Activated CD4-positive, alpha-beta T cell treated with anti-CD3 and anti-CD28 coated beads for 36 hours (primary cell): ENCODE measurements at regions of chr3 and their contacts with region 1.

Region 1: GRCh38 chr3:67654099-67654843 is at the start of gene SUCLG2:
- DNase-seq: peak; percentile 91
- ATAC-seq: peak; percentile 77
- H3K4me3 Mint-ChIP-seq: peak within 1 kb of the TSS; percentile 74
- H3K27ac Mint-ChIP-seq: peak within 1 kb of the TSS; percentile 91
- H3K4me1 Mint-ChIP-seq: peaks cover 59% of the 10 kb centered on the region
- H3K27me3 Mint-ChIP-seq: no peaks in the 10 kb centered on the region
- total RNA-seq, gene SUCLG2: 58.2 to 61.1 TPM

Region 2: GRCh38 chr3:66220602-66221377 is 1433.5 kb before region 1 on chr3 and contains the start of gene SLC25A26:
- CTCF ChIA-PET with region 1: no interaction called
- POLR2A ChIA-PET with region 1: no interaction called
- intact Hi-C with region 1: loop called in 1 of 2 experiments (anchors 5 kb)
- DNase-seq: peak; percentile 99
- ATAC-seq: peak; percentile 96
- H3K4me3 Mint-ChIP-seq: peak within 1 kb of the TSS; percentile 86
- H3K27ac Mint-ChIP-seq: peak within 1 kb of the TSS; percentile 92
- H3K4me1 Mint-ChIP-seq: peaks cover 48% of the 10 kb centered on the region
- H3K27me3 Mint-ChIP-seq: no peaks in the 10 kb centered on the region
- total RNA-seq, gene SLC25A26: 14.2 to 22.7 TPM

Region 3: GRCh38 chr3:66998113-66998903 is 656.0 kb before region 1 on chr3 and contains the start of gene KBTBD8:
- CTCF ChIA-PET with region 1: no interaction called
- POLR2A ChIA-PET with region 1: interaction called, 5 read pairs
- intact Hi-C with region 1: loop called (anchors 1 to 2 kb)
- DNase-seq: peak; percentile 98
- ATAC-seq: peak; percentile 95
- H3K4me3 Mint-ChIP-seq: peak within 1 kb of the TSS; percentile 88
- H3K27ac Mint-ChIP-seq: peak within 1 kb of the TSS; percentile 92
- H3K4me1 Mint-ChIP-seq: peaks cover 30% of the 10 kb centered on the region
- H3K27me3 Mint-ChIP-seq: peaks cover 7% of the 10 kb centered on the region
- total RNA-seq, gene KBTBD8: 8.3 to 9.2 TPM

Region 4: GRCh38 chr3:67384760-67385397 is 269.4 kb before region 1 on chr3:
- CTCF ChIA-PET with region 1: interaction called, 3 read pairs
- POLR2A ChIA-PET with region 1: no interaction called
- intact Hi-C with region 1: loop called in 1 of 2 experiments (anchors 10 kb)
- DNase-seq: peak; percentile 72
- ATAC-seq: peak; percentile 72
- H3K4me3 Mint-ChIP-seq: no peak overlapping the region
- H3K27ac Mint-ChIP-seq: no peak overlapping the region
- H3K4me1 Mint-ChIP-seq: peaks cover 35% of the 10 kb centered on the region
- H3K27me3 Mint-ChIP-seq: no peaks in the 10 kb centered on the region

Region 5: DNA sequence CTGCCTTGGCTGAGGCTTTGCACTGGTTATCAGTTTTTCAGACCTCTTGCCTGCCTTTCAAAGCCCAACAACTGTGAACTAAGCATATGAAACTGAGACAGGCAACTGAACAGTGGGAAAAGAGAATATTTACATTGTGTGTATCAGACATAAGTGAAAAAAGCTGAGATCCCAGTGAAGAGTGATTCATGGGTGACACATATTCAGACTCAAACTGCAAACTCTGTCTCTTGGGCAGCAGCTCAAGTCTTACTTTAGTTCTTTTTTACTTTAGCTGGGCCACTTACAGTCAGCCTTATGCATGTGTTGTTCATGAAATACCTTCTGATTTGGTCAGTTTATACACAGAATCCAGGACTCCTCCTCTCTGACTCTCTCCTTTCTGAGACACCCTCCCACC is 19.0 kb before region 1 on chr3:
- CTCF ChIA-PET with region 1: interaction called, 6 read pairs
- POLR2A ChIA-PET with region 1: interaction called, 4 read pairs
- intact Hi-C with region 1: loop called in 1 of 2 experiments (anchors 2 kb)
- DNase-seq: peak; percentile 13
- ATAC-seq: peak; percentile 96
- H3K4me3 Mint-ChIP-seq: no peak overlapping the region
- H3K27ac Mint-ChIP-seq: peak overlapping the region; percentile 55
- H3K4me1 Mint-ChIP-seq: peaks cover 68% of the 10 kb centered on the region
- H3K27me3 Mint-ChIP-seq: no peaks in the 10 kb centered on the region

Region 6: DNA sequence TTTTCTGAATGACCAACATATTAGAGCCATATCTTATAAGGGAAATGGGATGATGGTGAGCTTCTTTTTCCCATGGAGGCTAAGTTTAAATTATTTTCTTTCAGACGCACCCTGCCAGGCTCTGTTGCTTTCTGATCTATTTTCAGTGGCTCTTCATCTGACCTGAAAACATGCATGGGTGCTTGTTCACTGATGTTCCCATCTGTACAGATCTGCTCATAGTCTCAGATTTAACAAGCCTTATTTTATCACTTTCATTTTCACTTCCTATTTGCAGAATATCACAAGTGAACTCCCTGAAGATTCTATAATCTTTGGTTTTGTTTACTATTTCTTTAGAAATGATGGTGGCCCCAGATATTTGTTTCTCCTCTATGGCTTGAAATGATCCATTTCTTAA is 31.2 kb after region 1 on chr3:
- CTCF ChIA-PET with region 1: interaction called, 5 read pairs
- POLR2A ChIA-PET with region 1: no interaction called
- intact Hi-C with region 1: loop called in 1 of 2 experiments (anchors 1 kb)
- DNase-seq: no peak
- ATAC-seq: peak; percentile 82
- H3K4me3 Mint-ChIP-seq: peak overlapping the region; percentile 30
- H3K27ac Mint-ChIP-seq: peak overlapping the region; percentile 81
- H3K4me1 Mint-ChIP-seq: peaks cover 26% of the 10 kb centered on the region
- H3K27me3 Mint-ChIP-seq: no peaks in the 10 kb centered on the region

Region 7: DNA sequence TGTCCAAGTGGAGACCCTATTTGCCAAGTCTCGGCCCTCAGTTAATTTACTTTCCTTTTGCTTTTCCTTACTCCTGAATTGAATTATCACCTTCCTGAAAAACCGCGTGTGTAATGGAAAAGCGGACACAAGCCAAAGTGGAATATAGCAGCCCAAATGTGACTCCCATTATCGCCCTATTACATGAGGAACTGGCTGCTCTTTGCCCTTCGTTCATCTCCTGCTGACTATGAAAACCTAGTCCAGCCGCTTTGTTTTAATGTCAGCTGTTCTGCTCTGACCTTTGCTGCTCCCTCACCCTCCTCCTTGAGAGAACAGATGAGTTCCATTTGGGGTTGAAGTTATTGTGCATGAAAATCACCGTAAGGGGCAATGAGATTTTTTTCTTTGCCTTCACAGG is 632.8 kb after region 1 on chr3:
- CTCF ChIA-PET with region 1: no interaction called
- POLR2A ChIA-PET with region 1: no interaction called
- intact Hi-C with region 1: no loop called
- DNase-seq: no peak
- ATAC-seq: no peak
- H3K4me3 Mint-ChIP-seq: no peak overlapping the region
- H3K27ac Mint-ChIP-seq: no peak overlapping the region
- H3K4me1 Mint-ChIP-seq: no peaks in the 10 kb centered on the region
- H3K27me3 Mint-ChIP-seq: no peaks in the 10 kb centered on the region

Region 8: GRCh38 chr3:69084326-69085167 is 1430.3 kb after region 1 on chr3 and contains the start of gene ARL6IP5:
- CTCF ChIA-PET with region 1: no interaction called
- POLR2A ChIA-PET with region 1: no interaction called
- intact Hi-C with region 1: loop called (anchors 2 to 10 kb)
- DNase-seq: peak; percentile 97
- ATAC-seq: peak; percentile 48
- H3K4me3 Mint-ChIP-seq: peak within 1 kb of the TSS; percentile 90
- H3K27ac Mint-ChIP-seq: peak within 1 kb of the TSS; percentile 97
- H3K4me1 Mint-ChIP-seq: peaks cover 59% of the 10 kb centered on the region
- H3K27me3 Mint-ChIP-seq: no peaks in the 10 kb centered on the region
- total RNA-seq, gene ARL6IP5: 60.4 to 76.0 TPM